SK-N-SH (cell line): ENCODE measurements at regions of chr6 and their contacts with region 1.

Region 1: DNA sequence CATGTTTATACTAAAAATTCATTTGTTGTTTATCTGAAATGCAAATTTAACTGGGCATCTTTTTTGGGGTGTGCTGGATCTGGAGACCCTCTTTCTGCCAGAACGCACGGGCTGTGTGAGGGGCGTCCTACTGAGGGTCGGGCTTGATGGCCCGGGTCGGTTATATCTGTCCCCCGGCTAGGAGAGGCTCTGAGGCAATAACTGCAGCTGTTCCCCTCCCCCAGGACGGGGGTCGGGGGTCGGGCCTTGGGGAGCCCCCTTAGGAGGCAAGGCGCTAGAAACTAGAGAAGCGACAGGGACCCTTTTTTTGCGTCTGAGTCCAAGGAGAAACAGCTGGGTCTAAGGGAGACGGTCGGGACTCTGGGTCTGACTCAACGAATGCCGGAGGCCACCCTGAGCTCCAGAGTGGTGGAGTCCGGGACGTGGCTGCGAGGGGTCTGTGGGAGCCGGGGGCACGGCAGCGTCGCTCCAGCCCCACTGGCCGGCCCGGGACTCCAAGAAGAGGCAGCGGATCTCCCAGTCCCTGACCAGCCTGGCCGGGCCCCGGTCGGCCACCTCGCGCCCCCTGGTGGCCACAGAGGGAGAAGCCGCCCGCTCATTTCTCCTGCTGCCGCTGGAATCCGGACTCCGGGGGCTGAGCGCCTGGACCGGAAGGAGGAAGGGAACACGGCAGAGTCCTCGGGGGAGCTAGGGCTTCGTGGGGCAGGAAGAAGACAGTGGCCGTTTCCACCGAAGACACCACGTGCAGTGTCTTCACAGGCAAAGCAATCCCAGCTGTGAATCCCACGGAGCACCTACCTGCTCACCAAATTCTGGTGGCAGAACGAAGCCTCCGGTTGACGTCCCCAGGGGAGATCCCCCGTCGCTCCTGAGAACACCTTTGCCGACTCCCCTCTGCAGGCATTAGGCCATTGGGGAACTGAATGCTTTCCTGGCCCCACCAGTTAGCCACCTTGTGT is 24.0 kb upstream of the SCML4 start:
- DNase-seq: peak; percentile 95
- H3K4me3 ChIP-seq: peak overlapping the region; percentile 47 to 64
- H3K27ac ChIP-seq: no peak overlapping the region
- H3K4me1 ChIP-seq: peaks cover 0 to 4% of the 10 kb centered on the region in 2 experiments; a peak in 1 of 4 replicates
- H3K27me3 ChIP-seq: no peaks in the 10 kb centered on the region; the same call in 1 of the 2 replicates
- CTCF ChIP-seq: peak; percentile 88
- EP300 ChIP-seq: no peak
- RAD21 ChIP-seq: peak; percentile 82

Region 2: GRCh38 chr6:106764353-106764980 is 1083.7 kb before region 1 on chr6:
- CTCF ChIA-PET with region 1: no interaction called
- POLR2A ChIA-PET with region 1: no interaction called
- DNase-seq: no peak
- H3K4me3 ChIP-seq: no peak overlapping the region
- H3K27ac ChIP-seq: no peak overlapping the region
- H3K4me1 ChIP-seq: no peaks in the 10 kb centered on the region
- H3K27me3 ChIP-seq: no peaks in the 10 kb centered on the region
- CTCF ChIP-seq: no peak
- EP300 ChIP-seq: no peak
- RAD21 ChIP-seq: no peak

Region 3: DNA sequence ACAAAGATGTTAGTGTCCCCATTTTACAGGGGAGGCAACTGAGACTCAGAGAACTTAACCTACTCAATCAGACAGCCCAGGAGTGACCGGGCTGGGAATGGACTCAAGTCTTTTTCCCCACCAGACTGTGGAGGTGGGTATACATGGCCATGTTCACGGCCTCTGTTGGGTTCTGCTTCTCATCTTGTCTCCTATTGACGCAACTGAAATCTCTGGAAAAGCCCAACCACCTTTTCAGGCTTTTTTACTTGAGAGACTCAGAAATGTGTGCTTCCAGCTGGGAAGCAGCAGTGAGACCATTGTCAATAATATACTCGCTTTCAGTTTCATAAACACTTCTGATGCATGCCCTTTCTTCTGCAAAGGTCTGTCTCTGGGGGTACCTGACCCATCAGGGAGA is 287.5 kb before region 1 on chr6:
- CTCF ChIA-PET with region 1: no interaction called
- POLR2A ChIA-PET with region 1: no interaction called
- DNase-seq: no peak
- H3K4me3 ChIP-seq: no peak overlapping the region
- H3K27ac ChIP-seq: no peak overlapping the region; a peak in 1 of 4 replicates
- H3K4me1 ChIP-seq: peaks cover 0 to 40% of the 10 kb centered on the region in 2 experiments; a peak in 2 of 4 replicates
- H3K27me3 ChIP-seq: no peaks in the 10 kb centered on the region
- CTCF ChIP-seq: no peak
- EP300 ChIP-seq: no peak
- RAD21 ChIP-seq: no peak

Region 4: GRCh38 chr6:107691062-107691751 is 156.9 kb before region 1 on chr6:
- CTCF ChIA-PET with region 1: interaction called, 14 read pairs
- POLR2A ChIA-PET with region 1: no interaction called
- DNase-seq: no peak
- H3K4me3 ChIP-seq: no peak overlapping the region
- H3K27ac ChIP-seq: no peak overlapping the region
- H3K4me1 ChIP-seq: no peaks in the 10 kb centered on the region
- H3K27me3 ChIP-seq: no peaks in the 10 kb centered on the region
- CTCF ChIP-seq: no peak
- EP300 ChIP-seq: no peak
- RAD21 ChIP-seq: no peak

Region 5: DNA sequence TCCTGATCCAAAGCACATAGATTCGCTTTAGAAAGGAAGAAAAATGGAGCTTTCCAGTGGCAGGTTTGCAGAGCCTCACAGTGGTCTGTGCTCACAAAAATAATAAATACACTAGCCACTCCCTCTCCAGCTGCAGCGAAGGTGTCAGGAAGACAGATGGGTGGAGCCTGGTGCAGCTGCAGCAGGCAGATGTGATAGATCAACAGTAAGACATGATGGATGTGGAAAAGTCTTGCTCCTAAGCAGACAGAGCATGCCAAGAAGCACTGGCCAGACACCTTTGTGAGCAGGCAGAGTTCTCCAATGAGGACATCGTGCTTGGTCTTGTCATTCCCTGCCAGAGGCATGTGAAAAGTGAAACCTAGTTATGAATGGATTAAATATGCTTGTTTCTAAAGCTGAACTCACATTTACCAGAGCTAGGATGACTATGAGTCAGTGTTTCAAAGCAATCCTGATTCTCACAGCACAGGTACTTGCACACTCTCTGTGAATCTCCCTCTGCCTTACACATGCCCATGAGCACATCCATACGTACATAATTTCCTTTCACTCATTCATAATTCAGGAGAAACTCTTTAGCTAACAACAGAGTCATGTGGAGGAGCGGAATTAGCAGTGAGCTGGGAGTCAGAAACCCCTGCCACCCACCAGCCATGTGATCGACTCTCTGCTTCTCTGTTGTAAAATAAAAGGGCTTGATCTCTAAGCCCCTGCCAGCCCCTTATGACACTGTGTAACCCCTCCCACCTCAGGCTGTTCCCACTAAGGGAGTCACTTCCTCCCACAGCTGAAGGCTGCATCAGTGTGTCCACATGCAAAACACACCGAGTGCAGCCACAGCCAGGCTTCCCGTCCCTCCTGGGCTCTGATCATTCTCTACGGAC is 135.2 kb before region 1 on chr6:
- CTCF ChIA-PET with region 1: interaction called, 22 read pairs
- POLR2A ChIA-PET with region 1: no interaction called
- DNase-seq: peak; percentile 47
- H3K4me3 ChIP-seq: no peak overlapping the region
- H3K27ac ChIP-seq: peak overlapping the region in 1 of 2 experiments; percentile 83; a peak in 2 of 4 replicates
- H3K4me1 ChIP-seq: peaks cover 0 to 29% of the 10 kb centered on the region in 2 experiments; a peak in 3 of 4 replicates
- H3K27me3 ChIP-seq: no peaks in the 10 kb centered on the region
- CTCF ChIP-seq: no peak
- EP300 ChIP-seq: no peak; a peak in 1 of 4 replicates
- RAD21 ChIP-seq: no peak

Region 6: GRCh38 chr6:107786709-107787588 is 61.2 kb before region 1 on chr6:
- CTCF ChIA-PET with region 1: interaction called, 10 read pairs
- POLR2A ChIA-PET with region 1: no interaction called
- DNase-seq: no peak
- H3K4me3 ChIP-seq: no peak overlapping the region
- H3K27ac ChIP-seq: no peak overlapping the region
- H3K4me1 ChIP-seq: no peaks in the 10 kb centered on the region
- H3K27me3 ChIP-seq: 0 out of 2 replicates have a peak, but pooled peaks cover 2% of the 10 kb centered on the region
- CTCF ChIP-seq: no peak
- EP300 ChIP-seq: no peak
- RAD21 ChIP-seq: no peak

Region 7: GRCh38 chr6:107811591-107812218 is 36.4 kb before region 1 on chr6:
- CTCF ChIA-PET with region 1: interaction called, 20 read pairs
- POLR2A ChIA-PET with region 1: no interaction called
- DNase-seq: no peak
- H3K4me3 ChIP-seq: no peak overlapping the region
- H3K27ac ChIP-seq: no peak overlapping the region
- H3K4me1 ChIP-seq: peaks cover 0 to 2% of the 10 kb centered on the region in 2 experiments; a peak in 1 of 4 replicates
- H3K27me3 ChIP-seq: no peaks in the 10 kb centered on the region
- CTCF ChIP-seq: no peak
- EP300 ChIP-seq: no peak
- RAD21 ChIP-seq: no peak

Region 8: GRCh38 chr6:107832151-107833056 is 15.7 kb before region 1 on chr6:
- CTCF ChIA-PET with region 1: interaction called, 59 read pairs
- POLR2A ChIA-PET with region 1: no interaction called
- DNase-seq: no peak
- H3K4me3 ChIP-seq: no peak overlapping the region
- H3K27ac ChIP-seq: no peak overlapping the region
- H3K4me1 ChIP-seq: no peaks in the 10 kb centered on the region
- H3K27me3 ChIP-seq: no peaks in the 10 kb centered on the region; the same call in 1 of the 2 replicates
- CTCF ChIP-seq: no peak
- EP300 ChIP-seq: no peak
- RAD21 ChIP-seq: no peak

Region 9: GRCh38 chr6:108009894-108010293 is 161.8 kb after region 1 on chr6:
- CTCF ChIA-PET with region 1: no interaction called
- POLR2A ChIA-PET with region 1: no interaction called
- DNase-seq: no peak
- H3K4me3 ChIP-seq: no peak overlapping the region
- H3K27ac ChIP-seq: no peak overlapping the region
- H3K4me1 ChIP-seq: no peaks in the 10 kb centered on the region
- H3K27me3 ChIP-seq: no peaks in the 10 kb centered on the region
- CTCF ChIP-seq: no peak
- EP300 ChIP-seq: no peak
- RAD21 ChIP-seq: no peak